ENCODE measurements at regions of chr3 and their contacts with region 1.

Region 1: DNA sequence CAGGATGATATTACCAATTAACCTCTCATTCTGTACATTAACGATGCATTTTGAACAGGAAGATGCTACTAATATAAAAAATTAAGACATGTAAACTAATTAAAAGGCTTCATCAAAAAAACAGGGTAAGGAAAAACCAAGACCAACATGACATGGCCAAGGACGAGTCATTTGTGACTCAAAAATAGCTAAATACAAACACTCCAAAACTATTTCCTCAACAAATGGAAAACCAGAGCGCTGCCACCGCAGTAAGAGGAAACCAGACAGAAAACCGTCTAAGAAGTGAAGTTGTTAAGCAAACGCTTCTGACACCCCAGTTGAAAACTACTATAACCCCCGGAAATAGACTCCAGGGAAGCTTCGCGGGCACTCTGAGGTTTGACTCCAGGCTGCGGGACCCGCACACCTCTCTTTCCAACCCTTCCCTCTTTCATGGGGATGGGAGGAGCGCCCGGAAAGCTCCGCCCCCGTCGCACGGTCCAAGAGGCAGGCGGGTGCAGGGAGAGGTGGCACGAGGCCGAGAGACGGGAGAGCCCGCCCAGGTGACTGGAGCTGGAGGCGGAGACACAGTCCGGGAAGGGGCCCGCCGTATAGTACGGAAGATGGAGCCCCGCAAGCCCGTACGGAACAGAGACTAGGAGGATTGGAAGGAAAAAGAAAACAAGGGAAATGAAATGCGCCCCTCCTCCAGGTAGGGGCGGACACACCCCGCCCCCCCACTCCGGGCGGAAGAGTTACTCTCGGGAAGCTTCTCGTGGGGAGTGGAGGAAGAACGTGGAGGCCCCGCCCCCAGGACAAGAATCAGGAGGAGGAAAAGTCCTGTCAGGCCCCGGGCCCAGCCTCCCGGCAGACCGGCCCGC is 708 bp downstream of the DCAF1 start:
- DNase-seq: peak; percentile 96
- ATAC-seq: peak; percentile 85

Region 2: GRCh38 chr3:51670823-51671733 is 172.0 kb after region 1 on chr3 and contains the start of gene TEX264:
- intact Hi-C with region 1: loop called (anchors 1 kb)
- DNase-seq: peak; percentile 97
- ATAC-seq: peak; percentile 95
- total RNA-seq, gene TEX264: 37.1 TPM

Region 3: GRCh38 chr3:51799879-51800749 is 301.0 kb after region 1 on chr3:
- intact Hi-C with region 1: loop called (anchors 1 kb)
- DNase-seq: no peak
- ATAC-seq: no peak